Spleen (tissue), 13 donors: ENCODE measurements at regions of chr18 and their contacts with region 1.

Region 1: DNA sequence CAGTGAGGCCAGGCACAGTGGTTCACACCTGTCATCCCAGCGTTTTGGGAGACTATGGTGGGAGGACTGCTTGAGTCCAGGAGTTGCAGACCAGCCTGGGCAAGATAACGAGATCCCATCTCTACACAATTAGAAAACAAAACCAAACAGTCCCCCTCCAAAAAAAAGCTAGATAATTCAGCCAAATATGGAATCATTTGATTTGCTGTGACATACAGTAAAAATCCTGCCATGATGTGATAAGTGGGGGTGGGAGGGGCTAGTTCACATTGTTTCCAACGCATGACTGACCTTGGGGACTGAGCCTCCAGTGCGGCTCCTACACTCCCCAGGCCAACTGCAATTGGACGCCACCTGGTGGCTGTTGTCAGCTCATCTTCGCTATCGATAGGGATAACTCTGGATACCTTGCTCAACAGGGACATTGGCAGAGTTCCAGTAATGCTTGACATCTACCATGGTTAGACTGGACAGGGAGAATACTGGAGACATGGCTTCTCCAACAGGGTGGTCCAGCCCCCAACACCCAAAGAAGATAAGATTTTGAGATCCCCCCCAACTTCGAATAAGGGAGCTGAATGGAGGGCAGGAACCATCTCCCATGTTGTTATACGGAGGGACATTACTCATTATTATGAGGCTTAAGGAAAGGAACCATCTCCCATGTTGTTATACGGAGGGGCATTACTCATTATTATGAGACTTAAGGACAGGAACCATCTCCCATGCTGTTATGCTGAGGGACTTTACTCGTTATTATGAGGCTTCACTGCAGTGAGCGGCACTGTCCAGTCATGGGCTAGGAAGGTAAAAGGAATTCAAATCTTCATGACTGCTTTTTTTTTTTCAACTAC is 135.9 kb downstream of the TGIF1 start:
- DNase-seq: peak; percentile 91
- H3K4me3 ChIP-seq: peak overlapping the region in 1 of 8 donors; percentile 51
- H3K27ac ChIP-seq: peak overlapping the region in 7 of 8 donors; percentile 51 to 87 (median 79)
- H3K4me1 ChIP-seq: peaks cover 0 to 33% (median 28%) of the 10 kb centered on the region in 6 donors
- H3K27me3 ChIP-seq: no peaks in the 10 kb centered on the region
- CTCF ChIP-seq: peak; percentile 52 to 84 (median 75)
- POLR2A ChIP-seq: no peak

Region 2: DNA sequence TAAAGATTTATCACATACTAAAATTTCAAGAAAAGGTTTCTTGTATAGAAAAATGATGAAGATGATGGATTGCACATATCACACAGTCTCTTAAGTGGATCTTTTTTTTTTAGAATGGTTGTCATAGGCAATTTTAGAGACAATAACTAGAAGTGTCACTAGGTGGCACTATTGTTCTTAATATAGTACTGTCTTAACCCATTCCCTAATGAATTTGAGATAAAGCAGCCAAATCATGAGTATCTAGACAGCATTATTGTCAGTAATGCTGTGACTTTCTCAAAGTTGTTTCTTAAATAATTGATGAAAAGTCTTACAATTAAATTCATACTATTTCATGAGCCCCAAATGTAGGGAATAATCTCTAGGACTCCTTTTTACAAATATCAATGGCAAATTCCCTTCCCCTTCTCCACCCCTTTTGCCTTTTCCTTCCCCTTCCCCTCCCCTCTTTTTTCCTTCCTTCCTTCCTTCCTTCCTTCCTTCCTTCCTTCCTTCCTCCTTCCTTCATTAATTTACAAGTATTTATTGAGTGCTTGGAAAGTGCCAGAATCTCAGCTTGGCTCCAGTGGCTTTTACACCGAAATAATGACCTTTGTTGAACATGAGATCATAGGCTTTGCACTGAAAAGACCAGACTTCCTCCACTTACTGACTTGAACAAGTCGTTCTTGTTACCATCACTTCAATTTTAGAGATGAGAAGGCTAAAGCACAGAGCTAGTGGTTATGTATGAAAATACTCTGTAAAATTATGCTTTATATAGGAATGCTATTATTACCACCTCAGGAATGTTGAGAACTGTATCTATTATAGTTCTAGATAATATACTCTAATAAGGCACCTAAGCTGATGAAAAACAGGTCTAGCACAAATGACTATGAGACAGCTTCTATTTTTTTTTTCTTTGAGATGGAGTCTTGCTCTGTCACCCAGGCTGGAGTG is 304.2 kb before region 1 on chr18:
- intact Hi-C with region 1: loop called (anchors 5 kb)
- DNase-seq: no peak
- H3K4me3 ChIP-seq: no peak overlapping the region
- H3K27ac ChIP-seq: peak overlapping the region in 2 of 8 donors; percentile 24 to 65
- H3K4me1 ChIP-seq: peaks cover 0 to 47% (median 24%) of the 10 kb centered on the region in 6 donors
- H3K27me3 ChIP-seq: no peaks in the 10 kb centered on the region
- CTCF ChIP-seq: peak; percentile 52 to 87 (median 71)
- POLR2A ChIP-seq: no peak

Region 3: DNA sequence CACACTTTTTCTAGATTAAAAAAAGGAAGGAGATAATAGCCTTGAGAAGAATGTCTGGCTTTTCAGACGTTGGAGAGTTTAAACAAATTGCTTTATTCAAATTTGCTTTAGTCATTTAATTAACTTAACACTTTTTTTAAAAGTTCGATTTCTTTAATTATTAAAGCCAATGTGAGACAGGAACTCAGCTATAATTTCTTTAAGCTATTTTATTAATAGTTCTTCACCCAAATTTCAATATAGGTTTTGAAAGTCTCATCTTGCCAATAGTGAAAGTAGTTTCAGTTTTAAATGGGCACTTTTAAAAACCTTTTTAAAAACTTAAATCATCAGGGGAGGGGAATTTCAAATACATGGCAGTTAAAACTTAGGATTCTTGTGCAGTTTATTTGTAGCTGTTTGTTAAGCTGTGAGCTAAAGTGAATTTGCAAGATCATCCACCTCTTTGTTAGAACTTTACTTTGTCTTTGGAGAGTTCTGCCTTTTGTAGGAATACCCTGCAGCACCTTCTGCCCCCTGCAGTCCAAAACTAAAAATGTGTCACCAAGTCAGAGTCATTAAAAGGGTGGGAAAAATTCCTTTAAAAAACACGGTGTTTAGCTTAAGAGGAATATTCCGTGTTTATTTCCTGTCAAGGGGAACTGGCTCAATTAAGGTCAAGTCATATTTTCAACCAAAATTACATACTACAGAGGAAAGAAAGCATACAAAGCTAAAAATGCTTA is 131.4 kb before region 1 on chr18:
- intact Hi-C with region 1: loop called (anchors 5 kb)
- DNase-seq: no peak
- H3K4me3 ChIP-seq: peak overlapping the region; percentile 2 to 80 (median 70)
- H3K27ac ChIP-seq: peak overlapping the region; percentile 94 to 99 (median 99)
- H3K4me1 ChIP-seq: peaks cover 8 to 89% (median 64%) of the 10 kb centered on the region in 6 donors
- H3K27me3 ChIP-seq: no peaks in the 10 kb centered on the region
- CTCF ChIP-seq: peak; percentile 34 to 79 (median 67)
- POLR2A ChIP-seq: peak in 1 of 3 donors; percentile 22